Activated B cell treated with CpG ODN at 0.5 μM for 24 hours (primary cell): ENCODE measurements at regions of chr1 and their contacts with region 1.

Region 1: GRCh38 chr1:32351399-32352238 is 10.7 kb downstream of the FAM229A start:
- DNase-seq: peak; percentile 90
- ATAC-seq: peak; percentile 96
- H3K4me3 Mint-ChIP-seq: peak overlapping the region; percentile 91
- H3K27ac Mint-ChIP-seq: peak overlapping the region; percentile 91
- H3K4me1 Mint-ChIP-seq: peaks cover 22% of the 10 kb centered on the region
- H3K27me3 Mint-ChIP-seq: no peaks in the 10 kb centered on the region
- CTCF ChIP-seq: no peak

Region 2: GRCh38 chr1:32361674-32362473 is 10.3 kb after region 1 on chr1:
- CTCF ChIA-PET with region 1: interaction called, 3 read pairs
- POLR2A ChIA-PET with region 1: interaction called, 35 read pairs
- intact Hi-C with region 1: loop called (anchors 1 kb)
- DNase-seq: peak; percentile 46
- ATAC-seq: peak; percentile 38
- H3K4me3 Mint-ChIP-seq: peak overlapping the region; percentile 58
- H3K27ac Mint-ChIP-seq: peak overlapping the region; percentile 65
- H3K4me1 Mint-ChIP-seq: peaks cover 31% of the 10 kb centered on the region
- H3K27me3 Mint-ChIP-seq: no peaks in the 10 kb centered on the region
- CTCF ChIP-seq: no peak

Region 3: DNA sequence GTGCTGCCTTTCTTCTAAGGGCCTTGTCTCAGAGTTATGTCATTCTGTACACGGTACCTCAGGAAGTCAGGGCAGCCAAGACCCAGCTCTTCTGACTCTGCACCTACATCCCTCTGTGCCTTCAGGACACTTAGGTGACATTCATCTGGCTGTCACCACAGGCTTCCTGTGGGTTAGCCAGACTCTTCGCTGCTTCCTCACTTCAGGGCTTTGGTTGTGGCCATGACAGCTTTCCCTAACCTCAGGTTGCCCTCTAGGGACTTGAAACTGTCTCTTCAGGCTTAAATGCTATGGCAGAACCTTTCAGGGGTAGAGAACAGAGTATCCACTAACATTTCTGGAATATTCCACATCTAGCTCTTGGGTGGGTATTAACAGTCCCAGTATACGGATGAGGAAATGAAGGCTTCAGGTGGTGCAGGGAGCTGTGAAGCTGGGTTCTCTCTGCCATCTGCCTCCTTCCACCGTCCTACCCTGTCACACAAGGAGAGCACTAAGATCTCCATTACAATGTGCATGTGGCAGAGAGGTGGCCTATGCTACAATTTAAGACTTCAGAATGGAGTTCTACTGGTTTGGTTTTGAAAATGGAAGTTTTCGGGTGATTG is 20.6 kb after region 1 on chr1:
- CTCF ChIA-PET with region 1: no interaction called
- POLR2A ChIA-PET with region 1: interaction called, 23 read pairs
- intact Hi-C with region 1: no loop called
- DNase-seq: no peak
- ATAC-seq: peak; percentile 80
- H3K4me3 Mint-ChIP-seq: no peak overlapping the region
- H3K27ac Mint-ChIP-seq: no peak overlapping the region
- H3K4me1 Mint-ChIP-seq: peaks cover 11% of the 10 kb centered on the region
- H3K27me3 Mint-ChIP-seq: no peaks in the 10 kb centered on the region
- CTCF ChIP-seq: no peak